Breast epithelium (tissue), 4 donors: ENCODE measurements at regions of chr19 and their contacts with region 1.

Region 1: DNA sequence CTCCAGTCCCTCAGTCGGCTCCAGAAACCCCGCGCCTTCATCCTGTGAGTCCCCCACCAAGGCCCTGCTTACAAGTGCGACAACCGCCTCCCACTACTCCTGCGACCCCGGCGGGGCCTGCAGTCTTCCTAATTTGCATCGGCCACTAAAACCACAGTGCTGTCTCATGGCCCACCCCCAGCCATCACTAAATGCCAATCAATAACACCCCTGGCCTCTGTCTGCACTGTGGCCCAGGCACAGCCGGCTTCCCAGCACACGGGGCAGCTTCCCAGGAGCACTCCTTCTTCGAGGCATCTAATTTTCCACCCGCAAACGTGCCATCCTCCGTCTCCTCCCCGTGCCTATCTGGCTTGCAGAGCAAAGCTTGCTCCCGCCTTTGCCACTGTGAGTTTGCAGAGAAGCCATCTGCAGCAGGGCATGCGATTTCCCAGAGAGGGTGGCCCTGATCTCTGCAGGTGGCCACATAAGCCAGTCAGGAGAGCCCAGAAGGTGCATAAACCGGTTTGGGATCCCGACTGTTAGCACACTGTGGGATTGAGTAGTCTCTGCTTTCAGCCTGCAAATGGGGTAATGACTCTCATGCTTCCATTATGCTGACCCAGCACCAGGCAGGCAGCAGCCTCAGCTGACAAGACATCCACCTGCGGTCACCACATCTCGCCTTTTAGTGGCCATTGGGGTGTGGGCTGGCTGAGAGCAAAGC is 34.0 kb upstream of the USE1 start:
- DNase-seq: no peak
- H3K4me3 ChIP-seq: no peak overlapping the region
- H3K27ac ChIP-seq: no peak overlapping the region
- H3K4me1 ChIP-seq: no peaks in the 10 kb centered on the region
- H3K27me3 ChIP-seq: no peaks in the 10 kb centered on the region
- CTCF ChIP-seq: no peak
- POLR2A ChIP-seq: no peak

Region 2: GRCh38 chr19:17112700-17113099 is 68.5 kb before region 1 on chr19:
- intact Hi-C with region 1: loop called (anchors 2 kb)
- DNase-seq: no peak
- H3K4me3 ChIP-seq: no peak overlapping the region
- H3K27ac ChIP-seq: peak overlapping the region; percentile 80 to 84
- H3K4me1 ChIP-seq: peaks cover 2 to 6% of the 10 kb centered on the region in 2 donors
- H3K27me3 ChIP-seq: no peaks in the 10 kb centered on the region
- CTCF ChIP-seq: no peak
- POLR2A ChIP-seq: no peak

Region 3: DNA sequence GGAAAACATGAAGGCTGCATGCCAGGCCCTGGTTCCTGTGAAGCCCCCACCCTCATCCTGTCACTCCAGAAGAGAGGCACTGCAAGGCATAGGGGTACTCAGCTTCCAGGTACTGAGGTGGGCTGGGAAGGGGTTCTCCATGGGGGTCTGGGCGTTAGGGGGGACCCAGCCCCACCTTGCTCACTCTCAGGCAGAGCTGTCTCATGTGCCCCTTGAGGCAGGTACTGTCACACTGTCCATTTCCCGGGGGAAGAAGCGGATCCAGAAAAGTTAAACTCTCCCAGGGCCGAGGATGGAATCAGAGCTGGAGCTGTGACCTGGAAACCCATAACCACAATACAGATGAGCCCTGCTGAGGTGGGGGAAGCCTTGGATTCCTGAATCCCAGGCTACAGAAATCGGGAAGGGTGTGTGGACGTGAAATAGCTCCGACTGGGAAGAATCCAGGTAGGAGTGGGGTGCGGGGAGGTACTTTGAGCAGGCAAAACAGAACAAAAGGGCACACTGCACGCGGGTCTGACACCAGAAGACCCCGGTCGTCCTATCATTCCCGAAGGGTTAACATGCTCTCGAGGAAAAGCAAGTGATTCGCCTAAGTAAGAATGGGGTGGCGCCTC is 33.5 kb after region 1 on chr19:
- intact Hi-C with region 1: loop called (anchors 1 kb)
- DNase-seq: no peak
- H3K4me3 ChIP-seq: peak overlapping the region; percentile 56 to 86 (median 64)
- H3K27ac ChIP-seq: peak overlapping the region; percentile 92 to 99
- H3K4me1 ChIP-seq: peaks cover 0 to 4% of the 10 kb centered on the region in 2 donors
- H3K27me3 ChIP-seq: no peaks in the 10 kb centered on the region
- CTCF ChIP-seq: no peak
- POLR2A ChIP-seq: no peak